Activated CD4-positive, alpha-beta T cell treated with anti-CD3 and anti-CD28 coated beads for 36 hours (primary cell): ENCODE measurements at regions of chr4 and their contacts with region 1.

Region 1: DNA sequence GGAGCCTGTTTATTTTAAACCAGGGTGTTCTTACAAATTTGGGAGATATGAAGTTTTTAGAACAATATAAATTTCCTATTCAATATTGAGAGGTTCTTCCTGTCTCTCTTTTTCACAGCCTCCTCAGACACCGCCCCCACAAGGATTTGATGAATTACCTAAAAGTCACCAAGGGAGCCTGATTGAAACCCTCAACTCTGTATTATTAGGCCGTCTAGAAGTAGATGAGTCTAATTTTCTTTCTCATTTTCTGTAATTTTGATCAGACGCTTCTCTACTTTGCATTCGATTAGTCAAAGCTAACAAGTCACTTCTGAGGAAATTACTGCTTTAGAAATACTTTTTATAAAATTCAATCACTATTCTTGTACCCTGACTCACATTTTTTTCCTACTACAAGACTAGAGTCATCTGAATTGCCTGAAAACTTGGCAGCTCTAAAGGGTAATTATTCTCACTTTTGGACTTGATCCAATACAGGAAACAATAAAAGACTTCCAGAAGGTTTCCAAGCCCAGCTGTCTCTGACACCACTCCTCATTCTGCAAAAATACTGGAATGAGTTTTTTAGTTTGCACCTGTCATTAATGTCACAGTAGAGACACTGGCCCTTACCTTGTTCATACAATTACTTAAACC is 111.2 kb downstream of the ELOVL6 start:
- DNase-seq: peak; percentile 12
- ATAC-seq: peak; percentile 40
- H3K4me3 Mint-ChIP-seq: no peak overlapping the region
- H3K27ac Mint-ChIP-seq: peak overlapping the region; percentile 96
- H3K4me1 Mint-ChIP-seq: peaks cover 68% of the 10 kb centered on the region
- H3K27me3 Mint-ChIP-seq: no peaks in the 10 kb centered on the region

Region 2: GRCh38 chr4:110055158-110055768 is 31.9 kb before region 1 on chr4:
- CTCF ChIA-PET with region 1: interaction called, 3 read pairs
- POLR2A ChIA-PET with region 1: interaction called, 3 read pairs
- intact Hi-C with region 1: loop called in 1 of 2 experiments (anchors 2 kb)
- DNase-seq: peak; percentile 41
- ATAC-seq: peak; percentile 88
- H3K4me3 Mint-ChIP-seq: no peak overlapping the region
- H3K27ac Mint-ChIP-seq: no peak overlapping the region
- H3K4me1 Mint-ChIP-seq: peaks cover 24% of the 10 kb centered on the region
- H3K27me3 Mint-ChIP-seq: no peaks in the 10 kb centered on the region

Region 3: GRCh38 chr4:110122201-110122600 is 35.0 kb after region 1 on chr4:
- CTCF ChIA-PET with region 1: no interaction called
- POLR2A ChIA-PET with region 1: no interaction called
- intact Hi-C with region 1: no loop called
- DNase-seq: no peak
- ATAC-seq: no peak
- H3K4me3 Mint-ChIP-seq: no peak overlapping the region
- H3K27ac Mint-ChIP-seq: no peak overlapping the region
- H3K4me1 Mint-ChIP-seq: peaks cover 8% of the 10 kb centered on the region
- H3K27me3 Mint-ChIP-seq: no peaks in the 10 kb centered on the region

Region 4: GRCh38 chr4:110165382-110166285 is 78.4 kb after region 1 on chr4:
- CTCF ChIA-PET with region 1: interaction called, 3 read pairs
- POLR2A ChIA-PET with region 1: interaction called, 3 read pairs
- intact Hi-C with region 1: loop called (anchors 1 to 2 kb)
- DNase-seq: peak; percentile 77
- ATAC-seq: peak; percentile 100
- H3K4me3 Mint-ChIP-seq: peak overlapping the region; percentile 26
- H3K27ac Mint-ChIP-seq: peak overlapping the region; percentile 98
- H3K4me1 Mint-ChIP-seq: peaks cover 34% of the 10 kb centered on the region
- H3K27me3 Mint-ChIP-seq: no peaks in the 10 kb centered on the region

Region 5: GRCh38 chr4:110296892-110297291 is 209.7 kb after region 1 on chr4:
- CTCF ChIA-PET with region 1: no interaction called
- POLR2A ChIA-PET with region 1: no interaction called
- intact Hi-C with region 1: loop called (anchors 1 kb)
- DNase-seq: no peak
- ATAC-seq: peak; percentile 87
- H3K4me3 Mint-ChIP-seq: no peak overlapping the region
- H3K27ac Mint-ChIP-seq: no peak overlapping the region
- H3K4me1 Mint-ChIP-seq: peaks cover 14% of the 10 kb centered on the region
- H3K27me3 Mint-ChIP-seq: peaks cover 32% of the 10 kb centered on the region